ENCODE measurements at regions of chr2 and their contacts with region 1.

Region 1: GRCh38 chr2:42117923-42118753 is 51.0 kb upstream of the EML4 start:
- DNase-seq: no peak
- ATAC-seq: peak; percentile 90
- H3K4me3 Mint-ChIP-seq: peak overlapping the region; percentile 28
- H3K27ac Mint-ChIP-seq: peak overlapping the region; percentile 69
- H3K4me1 Mint-ChIP-seq: peaks cover 67% of the 10 kb centered on the region
- H3K27me3 Mint-ChIP-seq: no peaks in the 10 kb centered on the region
- CTCF ChIP-seq: no peak

Region 2: GRCh38 chr2:42132966-42133641 is 15.0 kb after region 1 on chr2:
- CTCF ChIA-PET with region 1: interaction called, 4 read pairs
- POLR2A ChIA-PET with region 1: interaction called, 23 read pairs
- intact Hi-C with region 1: loop called (anchors 1 kb)
- DNase-seq: peak; percentile 57
- ATAC-seq: peak; percentile 93
- H3K4me3 Mint-ChIP-seq: peak overlapping the region; percentile 80
- H3K27ac Mint-ChIP-seq: peak overlapping the region; percentile 89
- H3K4me1 Mint-ChIP-seq: peaks cover 80% of the 10 kb centered on the region
- H3K27me3 Mint-ChIP-seq: no peaks in the 10 kb centered on the region
- CTCF ChIP-seq: no peak

Measured in activated B cell treated with CpG ODN at 0.5 μM for 24 hours (primary cell).